Activated naive CD4-positive, alpha-beta T cell treated with anti-CD3 and anti-CD28 coated beads for 36 hours (primary cell): ENCODE measurements at regions of chrX and their contacts with region 1.

Region 1: GRCh38 chrX:119753571-119754257 is 4.7 kb upstream of the SOWAHD start:
- DNase-seq: peak; percentile 70
- H3K4me3 Mint-ChIP-seq: no peak overlapping the region
- H3K27ac Mint-ChIP-seq: peak overlapping the region; percentile 81
- H3K4me1 Mint-ChIP-seq: peaks cover 41% of the 10 kb centered on the region
- H3K27me3 Mint-ChIP-seq: no peaks in the 10 kb centered on the region

Region 2: DNA sequence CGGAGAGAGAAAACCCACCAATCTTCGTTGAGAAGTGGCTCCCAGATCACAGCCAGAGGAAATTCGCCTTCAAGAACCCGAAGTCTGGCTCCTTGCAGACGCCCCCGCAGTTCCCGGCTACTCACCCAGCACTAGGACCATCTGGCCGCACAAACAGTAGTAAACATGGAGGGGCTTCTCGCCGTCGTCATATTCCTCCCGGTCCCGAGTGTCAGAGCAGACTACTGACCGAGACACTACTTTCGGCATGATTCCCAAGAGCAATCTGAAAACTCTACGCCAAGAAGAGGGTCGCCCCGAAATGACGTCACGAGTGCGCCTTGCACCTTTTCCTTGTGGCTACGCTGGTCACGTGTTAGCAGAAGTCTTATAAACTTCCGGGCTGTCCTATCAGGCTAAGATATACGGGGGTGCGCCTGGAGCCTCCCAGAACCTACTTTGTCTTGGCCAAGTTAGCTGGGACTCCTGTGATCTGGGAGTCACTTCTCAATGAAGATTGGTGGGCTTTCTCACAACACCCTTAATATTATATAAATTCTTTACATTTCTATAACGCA is 188.5 kb before region 1 on chrX and contains the start of gene STEEP1:
- CTCF ChIA-PET with region 1: no interaction called
- intact Hi-C with region 1: loop called (anchors 2 kb)
- DNase-seq: peak; percentile 95
- H3K4me3 Mint-ChIP-seq: peak within 1 kb of the TSS; percentile 95
- H3K27ac Mint-ChIP-seq: peak within 1 kb of the TSS; percentile 89
- H3K4me1 Mint-ChIP-seq: peaks cover 20% of the 10 kb centered on the region
- H3K27me3 Mint-ChIP-seq: no peaks in the 10 kb centered on the region
- total RNA-seq, gene STEEP1: 19.6 to 20.7 TPM

Region 3: DNA sequence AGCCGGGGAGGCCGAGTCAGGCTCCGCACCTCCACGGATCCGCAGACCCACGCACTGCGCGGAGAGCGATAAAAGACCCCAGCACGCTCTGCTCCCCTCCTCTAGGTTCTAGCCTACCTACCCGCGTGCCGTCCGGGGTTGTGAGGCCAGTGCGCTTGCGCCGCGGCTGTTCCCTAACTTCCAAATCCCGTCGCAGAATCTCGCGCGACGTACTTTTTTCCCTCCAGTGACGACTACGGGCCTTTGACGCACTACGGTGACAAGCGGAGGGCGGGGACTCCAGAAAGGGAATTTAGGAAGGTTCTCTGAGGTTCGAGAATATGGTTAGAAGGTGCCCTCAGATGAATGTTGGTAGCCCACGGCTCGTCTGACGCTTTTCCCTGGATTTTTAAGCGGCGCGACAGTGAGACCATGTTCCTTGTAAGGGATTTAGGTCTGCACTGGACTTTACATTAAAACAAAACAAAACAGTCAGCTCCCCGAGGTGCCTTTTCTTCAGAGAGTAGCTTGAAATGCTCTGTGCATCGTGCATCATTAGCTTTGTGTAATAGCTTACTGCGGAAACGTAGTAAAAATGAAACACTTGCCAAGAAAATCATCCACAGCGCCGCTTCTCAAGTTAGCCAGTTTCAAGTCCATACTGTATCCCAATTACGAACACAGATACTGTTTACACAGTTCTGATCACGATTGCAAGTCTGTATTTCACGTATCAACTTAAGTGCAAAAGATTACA is 147.3 kb before region 1 on chrX and contains the start of gene NKRF:
- CTCF ChIA-PET with region 1: interaction called, 5 read pairs
- intact Hi-C with region 1: loop called (anchors 1 kb)
- DNase-seq: peak; percentile 94
- H3K4me3 Mint-ChIP-seq: peak within 1 kb of the TSS; percentile 96
- H3K27ac Mint-ChIP-seq: peak within 1 kb of the TSS; percentile 93
- H3K4me1 Mint-ChIP-seq: peaks cover 39% of the 10 kb centered on the region
- H3K27me3 Mint-ChIP-seq: no peaks in the 10 kb centered on the region
- total RNA-seq, gene NKRF: 15.8 to 17.0 TPM

Region 4: GRCh38 chrX:119682019-119682989 is 71.4 kb before region 1 on chrX:
- CTCF ChIA-PET with region 1: no interaction called
- intact Hi-C with region 1: no loop called
- DNase-seq: peak; percentile 54
- H3K4me3 Mint-ChIP-seq: peak overlapping the region; percentile 75
- H3K27ac Mint-ChIP-seq: peak overlapping the region; percentile 99
- H3K4me1 Mint-ChIP-seq: peaks cover 51% of the 10 kb centered on the region
- H3K27me3 Mint-ChIP-seq: no peaks in the 10 kb centered on the region

Region 5: DNA sequence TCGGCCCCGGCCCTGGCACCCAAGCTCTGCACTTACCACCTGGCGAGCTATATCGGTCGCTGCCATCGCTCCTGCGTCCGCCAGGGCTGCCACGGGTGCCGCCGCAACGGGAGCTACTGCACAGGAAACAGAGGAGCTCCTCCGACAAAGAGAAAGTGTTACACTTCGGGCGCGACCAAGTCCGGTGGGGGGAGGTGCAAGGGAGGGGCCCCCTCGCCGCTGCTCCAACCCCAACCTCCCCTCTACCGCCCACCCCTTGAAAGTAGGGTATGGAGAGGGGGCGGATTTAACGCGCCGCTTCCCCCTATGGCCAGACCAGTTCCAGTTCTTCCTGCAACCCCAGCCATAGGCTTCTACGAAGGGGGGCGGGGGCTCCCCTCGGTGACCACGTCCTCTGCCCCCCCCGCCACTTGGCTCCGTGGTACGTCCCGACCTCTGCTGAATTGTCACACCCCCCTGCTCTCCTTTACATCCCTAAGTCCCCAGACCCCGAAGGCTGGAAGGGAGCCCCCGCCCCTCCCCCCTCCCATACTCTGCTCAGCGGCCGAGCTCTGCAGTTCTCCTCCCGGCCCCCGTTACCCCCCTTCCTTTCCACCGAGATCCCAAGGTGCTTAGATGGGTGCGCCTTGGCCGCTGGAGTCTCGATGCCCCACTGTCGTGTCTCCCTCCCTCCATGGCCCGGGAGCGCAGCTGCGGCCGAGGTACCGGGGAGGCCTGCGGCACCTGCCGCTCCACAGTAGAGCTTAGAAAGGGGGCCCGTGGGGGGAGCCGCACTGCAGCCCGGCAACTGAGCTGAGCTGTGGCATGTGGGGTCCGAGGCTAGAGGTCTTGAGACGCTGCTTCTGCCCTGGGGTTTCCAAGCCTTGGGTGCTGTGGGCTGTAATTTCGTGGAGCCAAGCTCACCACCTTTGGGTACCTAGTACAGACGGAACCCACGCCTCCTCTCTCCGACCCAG is 60.4 kb before region 1 on chrX and contains the start of gene SEPTIN6:
- CTCF ChIA-PET with region 1: no interaction called
- intact Hi-C with region 1: loop called (anchors 1 kb)
- DNase-seq: peak; percentile 86
- H3K4me3 Mint-ChIP-seq: peak within 1 kb of the TSS; percentile 95
- H3K27ac Mint-ChIP-seq: peak within 1 kb of the TSS; percentile 100
- H3K4me1 Mint-ChIP-seq: peaks cover 10% of the 10 kb centered on the region
- H3K27me3 Mint-ChIP-seq: no peaks in the 10 kb centered on the region
- total RNA-seq, gene SEPTIN6: 137 to 143 TPM

Region 6: GRCh38 chrX:119791438-119792231 is 37.9 kb after region 1 on chrX and contains the start of gene RPL39:
- CTCF ChIA-PET with region 1: no interaction called
- intact Hi-C with region 1: loop called (anchors 1 kb)
- DNase-seq: peak; percentile 82
- H3K4me3 Mint-ChIP-seq: peak within 1 kb of the TSS; percentile 86
- H3K27ac Mint-ChIP-seq: peak within 1 kb of the TSS; percentile 95
- H3K4me1 Mint-ChIP-seq: peaks cover 29% of the 10 kb centered on the region
- H3K27me3 Mint-ChIP-seq: no peaks in the 10 kb centered on the region
- total RNA-seq, gene RPL39: 3,049 to 3,109 TPM

Region 7: DNA sequence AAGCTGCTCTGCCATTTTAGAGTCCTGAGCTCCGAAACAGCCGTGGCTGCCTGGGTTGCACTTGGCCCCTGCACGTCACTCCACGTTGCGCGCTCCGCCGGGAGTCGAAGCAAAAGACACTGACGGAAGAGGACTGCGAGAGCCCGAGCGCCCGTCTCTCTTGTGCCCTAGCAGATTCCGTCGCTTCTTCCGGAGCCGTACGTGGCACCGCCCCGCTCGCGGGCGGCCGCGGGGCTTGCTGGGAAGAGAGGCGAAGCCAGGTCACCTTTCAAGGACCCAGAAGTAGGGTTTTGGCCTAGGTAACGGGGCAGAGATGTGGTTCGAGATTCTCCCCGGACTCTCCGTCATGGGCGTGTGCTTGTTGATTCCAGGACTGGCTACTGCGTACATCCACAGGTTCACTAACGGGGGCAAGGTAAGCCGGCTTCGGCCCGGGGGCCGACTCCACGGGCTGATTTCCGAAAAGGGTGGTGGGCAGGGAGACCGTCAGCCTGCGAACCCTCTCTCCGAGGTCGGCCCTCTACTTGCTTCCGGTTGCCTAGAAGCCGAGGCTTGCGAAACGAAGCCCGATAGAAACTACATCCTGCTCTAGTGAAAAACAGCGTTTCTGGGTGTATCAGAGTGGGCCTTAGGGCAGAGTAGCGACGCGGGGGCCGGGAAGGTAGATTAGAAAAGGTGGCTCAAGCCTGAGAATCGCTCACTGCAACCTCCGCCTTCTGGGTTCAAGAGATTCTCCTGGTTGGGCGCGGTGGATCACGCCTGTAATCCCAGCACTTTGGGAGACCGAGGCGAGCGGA is 118.1 kb after region 1 on chrX and contains the starts of genes NDUFA1 and RNF113A:
- CTCF ChIA-PET with region 1: interaction called, 3 read pairs
- intact Hi-C with region 1: loop called (anchors 1 kb)
- DNase-seq: peak; percentile 86
- H3K4me3 Mint-ChIP-seq: peak within 1 kb of the TSS; percentile 97
- H3K27ac Mint-ChIP-seq: peak within 1 kb of the TSS; percentile 98
- H3K4me1 Mint-ChIP-seq: peaks cover 13% of the 10 kb centered on the region
- H3K27me3 Mint-ChIP-seq: no peaks in the 10 kb centered on the region
- total RNA-seq, gene NDUFA1: 105 to 107 TPM
- total RNA-seq, gene RNF113A: 20.8 to 22.0 TPM

Region 8: DNA sequence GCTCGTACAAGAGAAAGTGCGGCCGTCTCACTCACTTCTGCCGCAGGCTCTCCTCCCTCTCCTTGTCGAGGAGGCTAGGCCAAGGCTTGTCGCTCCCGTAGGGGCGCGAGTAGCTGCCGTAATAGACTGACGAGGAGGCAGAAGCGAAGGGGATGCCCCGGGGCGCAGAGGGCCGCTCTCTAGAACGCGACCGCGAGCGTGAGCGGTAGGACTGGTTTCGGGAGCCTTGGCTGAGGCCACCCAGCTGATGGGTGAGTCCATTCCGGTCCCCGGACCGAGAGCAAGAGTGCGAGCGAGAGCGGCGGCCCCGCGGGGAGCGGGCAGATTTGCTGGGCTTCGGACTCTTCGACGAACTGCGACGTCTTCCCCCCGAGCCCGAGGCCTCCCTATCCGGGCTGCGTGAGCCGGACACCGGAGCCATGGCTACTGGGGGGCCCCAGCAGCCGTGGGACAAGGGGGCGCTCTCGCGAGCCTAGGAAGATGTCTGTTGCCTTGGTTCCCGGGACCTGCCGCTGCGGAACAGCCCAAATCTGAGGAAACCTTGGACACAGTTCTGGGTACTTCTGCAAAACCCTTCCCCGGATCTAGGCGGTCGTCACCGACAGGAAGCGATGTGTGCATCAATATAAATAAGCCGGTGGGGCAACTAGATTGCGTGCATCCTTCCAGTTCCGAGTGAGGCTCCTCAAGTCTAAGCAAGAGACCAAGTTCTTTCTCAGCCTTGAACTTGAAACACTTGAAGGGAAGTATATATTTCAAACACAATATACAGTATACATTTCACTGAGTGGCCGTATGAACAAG is 189.7 kb after region 1 on chrX and contains the start of gene NKAP:
- CTCF ChIA-PET with region 1: no interaction called
- intact Hi-C with region 1: loop called (anchors 1 kb)
- DNase-seq: peak; percentile 86
- H3K4me3 Mint-ChIP-seq: peak within 1 kb of the TSS; percentile 98
- H3K27ac Mint-ChIP-seq: peak within 1 kb of the TSS; percentile 95
- H3K4me1 Mint-ChIP-seq: peaks cover 23% of the 10 kb centered on the region
- H3K27me3 Mint-ChIP-seq: no peaks in the 10 kb centered on the region
- total RNA-seq, gene NKAP: 12.3 to 12.7 TPM